Activated CD4-positive, alpha-beta T cell treated with anti-CD3 and anti-CD28 coated beads, Interleukin-2, amount 10 ng/mL, durations not matched to agents 24 days and 14 days (primary cell): ENCODE measurements at regions of chr18 and their contacts with region 1.

Region 1: DNA sequence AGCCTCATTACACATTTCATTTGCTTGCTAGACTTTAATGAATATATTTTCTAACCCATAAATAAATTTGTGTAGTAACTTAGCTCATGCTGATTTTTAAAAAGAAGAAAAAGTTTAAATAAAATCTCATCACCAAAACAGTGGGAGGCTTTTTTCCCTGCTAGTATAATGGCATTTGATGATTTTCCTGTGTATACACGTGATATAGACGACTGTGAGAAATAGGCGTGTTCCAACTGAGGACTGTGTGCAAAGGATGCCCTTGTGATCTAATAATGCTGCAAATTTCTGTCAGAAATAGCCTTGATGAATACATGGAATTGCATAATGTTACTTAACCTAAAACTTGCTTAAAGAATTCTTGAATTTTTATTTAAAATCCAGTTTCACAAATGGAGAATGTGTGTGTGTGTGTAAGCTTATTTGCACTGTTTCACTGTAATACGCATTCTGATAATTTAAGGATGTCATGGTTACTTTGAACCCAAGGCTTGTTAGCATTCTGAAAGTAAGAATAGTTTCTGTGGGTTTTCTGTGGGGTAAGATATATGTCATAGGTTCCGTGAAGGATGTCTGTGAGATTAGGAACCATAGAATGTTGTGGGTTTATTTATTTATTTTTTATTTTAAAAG is 178.0 kb downstream of the DLGAP1 start:
- DNase-seq: no peak
- H3K4me3 Mint-ChIP-seq: no peak overlapping the region
- H3K27ac Mint-ChIP-seq: no peak overlapping the region
- H3K4me1 Mint-ChIP-seq: no peaks in the 10 kb centered on the region
- H3K27me3 Mint-ChIP-seq: no peaks in the 10 kb centered on the region

Region 2: GRCh38 chr18:4193086-4193485 is 84.0 kb before region 1 on chr18:
- intact Hi-C with region 1: no loop called
- DNase-seq: no peak
- H3K4me3 Mint-ChIP-seq: no peak overlapping the region
- H3K27ac Mint-ChIP-seq: no peak overlapping the region
- H3K4me1 Mint-ChIP-seq: no peaks in the 10 kb centered on the region
- H3K27me3 Mint-ChIP-seq: no peaks in the 10 kb centered on the region

Region 3: DNA sequence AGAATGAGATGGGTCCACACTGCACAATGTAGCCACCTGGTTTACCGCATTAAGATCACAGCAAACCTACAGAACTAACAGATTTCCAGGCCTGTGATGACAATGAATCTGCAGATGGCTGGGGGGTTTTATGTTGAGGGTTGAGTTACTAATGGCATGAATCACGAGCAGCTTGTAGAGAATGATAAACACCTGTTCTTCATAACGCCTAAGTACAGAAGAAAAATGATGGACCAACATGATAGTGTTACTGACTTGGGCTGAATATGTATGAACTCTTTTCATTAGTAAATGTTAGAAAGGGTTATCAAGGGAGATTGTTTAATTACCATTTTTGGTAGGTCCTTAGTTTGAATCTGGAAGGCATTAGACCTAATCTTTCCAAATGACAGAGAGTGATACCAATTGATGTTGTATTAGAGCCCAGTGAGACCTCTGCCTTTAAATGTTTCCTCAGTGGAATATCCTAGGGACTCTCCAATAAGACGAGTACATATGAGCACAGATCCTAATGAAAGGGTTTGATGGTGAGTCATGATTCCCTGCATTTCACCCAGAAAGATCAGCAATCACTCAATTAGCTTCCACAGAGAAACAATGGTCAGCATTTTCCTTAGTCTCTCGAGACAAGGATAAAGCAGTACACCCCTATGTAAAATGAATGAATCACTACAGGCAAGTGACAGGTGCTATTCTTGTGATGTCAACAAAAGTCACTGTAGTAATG is 65.8 kb before region 1 on chr18:
- intact Hi-C with region 1: loop called (anchors 10 kb)
- DNase-seq: no peak
- H3K4me3 Mint-ChIP-seq: no peak overlapping the region
- H3K27ac Mint-ChIP-seq: no peak overlapping the region
- H3K4me1 Mint-ChIP-seq: no peaks in the 10 kb centered on the region
- H3K27me3 Mint-ChIP-seq: no peaks in the 10 kb centered on the region

Region 4: GRCh38 chr18:4391859-4392258 is 114.8 kb after region 1 on chr18:
- intact Hi-C with region 1: no loop called
- DNase-seq: no peak
- H3K4me3 Mint-ChIP-seq: no peak overlapping the region
- H3K27ac Mint-ChIP-seq: no peak overlapping the region
- H3K4me1 Mint-ChIP-seq: no peaks in the 10 kb centered on the region
- H3K27me3 Mint-ChIP-seq: no peaks in the 10 kb centered on the region